Heart right ventricle (tissue), 16 donors: ENCODE measurements at regions of chr3 and their contacts with region 1.

Region 1: GRCh38 chr3:35965908-35966307 is 326.6 kb downstream of the ARPP21 start:
- DNase-seq: no peak
- ATAC-seq: peak in 1 of 8 donors; percentile 51
- H3K4me3 ChIP-seq: no peak overlapping the region
- H3K27ac ChIP-seq: no peak overlapping the region
- H3K4me1 ChIP-seq: peaks cover 0 to 18% (median 4%) of the 10 kb centered on the region in 9 donors
- H3K27me3 ChIP-seq: no peaks in the 10 kb centered on the region
- CTCF ChIP-seq: peak; percentile 12 to 79 (median 64)

Region 2: GRCh38 chr3:36060950-36061349 is 95.0 kb after region 1 on chr3:
- intact Hi-C with region 1: no loop called
- DNase-seq: no peak
- ATAC-seq: no peak
- H3K4me3 ChIP-seq: no peak overlapping the region
- H3K27ac ChIP-seq: no peak overlapping the region
- H3K4me1 ChIP-seq: no peaks in the 10 kb centered on the region
- H3K27me3 ChIP-seq: no peaks in the 10 kb centered on the region
- CTCF ChIP-seq: no peak

Region 3: GRCh38 chr3:36540888-36541518 is 575.1 kb after region 1 on chr3:
- intact Hi-C with region 1: loop called in 1 of 10 experiments (anchors 10 kb)
- DNase-seq: no peak
- ATAC-seq: no peak
- H3K4me3 ChIP-seq: no peak overlapping the region
- H3K27ac ChIP-seq: no peak overlapping the region
- H3K4me1 ChIP-seq: peaks cover 0 to 4% (median 0%) of the 10 kb centered on the region in 9 donors
- H3K27me3 ChIP-seq: no peaks in the 10 kb centered on the region
- CTCF ChIP-seq: peak in 7 of 9 donors; percentile 23 to 67 (median 39)

Region 4: GRCh38 chr3:36700537-36701248 is 734.8 kb after region 1 on chr3:
- intact Hi-C with region 1: loop called (anchors 2 to 5 kb)
- DNase-seq: peak; percentile 16 to 42
- ATAC-seq: peak in 5 of 8 donors; percentile 67 to 79 (median 74)
- H3K4me3 ChIP-seq: no peak overlapping the region
- H3K27ac ChIP-seq: no peak overlapping the region
- H3K4me1 ChIP-seq: no peaks in the 10 kb centered on the region
- H3K27me3 ChIP-seq: no peaks in the 10 kb centered on the region
- CTCF ChIP-seq: peak; percentile 48 to 88 (median 79)

Region 5: GRCh38 chr3:37419979-37420378 is 1454.1 kb after region 1 on chr3:
- intact Hi-C with region 1: loop called in 1 of 10 experiments (anchors 10 kb)
- DNase-seq: no peak
- ATAC-seq: no peak
- H3K4me3 ChIP-seq: no peak overlapping the region
- H3K27ac ChIP-seq: no peak overlapping the region
- H3K4me1 ChIP-seq: no peaks in the 10 kb centered on the region
- H3K27me3 ChIP-seq: no peaks in the 10 kb centered on the region
- CTCF ChIP-seq: no peak